ENCODE measurements at regions of chr4 and their contacts with region 1.

Region 1: DNA sequence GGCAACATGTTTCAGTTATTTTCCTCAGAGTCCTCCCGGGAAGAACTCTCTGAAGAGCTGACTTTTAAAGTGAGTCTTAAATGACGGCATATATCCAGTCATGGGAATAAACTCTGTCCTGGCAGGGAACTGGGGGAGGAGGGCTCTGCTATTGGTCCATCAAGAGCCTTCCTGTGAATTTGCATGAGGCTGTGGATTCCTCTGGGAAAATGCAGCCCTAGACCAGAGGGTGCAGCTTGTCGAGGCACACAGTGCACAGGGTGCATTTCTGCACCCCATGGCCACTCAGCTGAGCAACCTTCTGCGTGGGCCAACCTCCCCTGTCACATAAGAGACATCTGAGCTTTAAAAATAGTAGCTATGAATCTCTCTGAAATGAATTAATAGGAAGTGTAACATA is 360.0 kb downstream of the GALNTL6 start:
- DNase-seq: no peak
- H3K4me3 ChIP-seq: no peak overlapping the region
- H3K27ac ChIP-seq: no peak overlapping the region
- H3K4me1 ChIP-seq: no peaks in the 10 kb centered on the region
- H3K27me3 ChIP-seq: no peaks in the 10 kb centered on the region
- CTCF ChIP-seq: no peak

Region 2: DNA sequence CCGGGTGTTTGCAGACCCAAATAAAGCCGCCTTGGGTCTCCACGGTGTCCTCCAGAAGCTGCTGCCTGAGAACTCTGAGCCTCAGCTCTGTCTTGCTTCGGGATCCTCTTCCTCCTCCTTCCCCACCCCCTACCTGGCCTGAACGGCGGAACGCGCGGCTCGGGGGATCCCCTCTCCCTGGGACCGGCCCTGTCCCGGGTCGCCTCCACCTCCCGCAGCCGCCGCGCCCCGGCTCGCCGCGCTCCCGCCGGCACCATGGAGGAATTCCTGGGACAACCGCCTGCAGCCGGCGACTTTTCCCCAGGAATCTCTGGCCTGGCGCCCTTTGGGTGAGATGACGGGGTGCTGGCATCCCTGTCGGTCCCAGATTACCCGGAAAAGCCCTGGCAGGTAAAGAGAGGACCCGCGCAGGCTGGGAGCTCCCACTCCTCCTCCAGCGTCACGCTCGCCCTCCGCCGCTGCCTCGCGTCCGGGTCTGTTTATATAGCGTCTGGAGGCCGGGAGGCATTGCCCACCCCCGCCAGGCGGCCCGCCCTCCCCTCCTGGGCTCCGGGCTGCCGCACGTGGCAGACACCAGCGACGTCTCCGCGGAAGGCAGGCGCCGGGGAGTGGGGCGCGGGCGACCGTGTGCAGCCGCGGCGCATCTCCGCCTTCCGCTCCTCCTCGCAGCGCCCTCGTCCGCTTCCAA is 360.2 kb before region 1 on chr4 and contains the start of gene GALNTL6:
- intact Hi-C with region 1: no loop called
- DNase-seq: no peak
- H3K4me3 ChIP-seq: peak within 1 kb of the TSS; percentile 37 to 55
- H3K27ac ChIP-seq: no peak within 1 kb of the TSS
- H3K4me1 ChIP-seq: peaks cover 0 to 20% (median 14%) of the 10 kb centered on the region in 4 donors
- H3K27me3 ChIP-seq: peaks cover 0 to 15% of the 10 kb centered on the region in 2 donors
- CTCF ChIP-seq: no peak

Region 3: GRCh38 chr4:172073590-172073989 is 99.6 kb before region 1 on chr4:
- intact Hi-C with region 1: no loop called
- DNase-seq: no peak
- H3K4me3 ChIP-seq: no peak overlapping the region
- H3K27ac ChIP-seq: no peak overlapping the region
- H3K4me1 ChIP-seq: no peaks in the 10 kb centered on the region
- H3K27me3 ChIP-seq: no peaks in the 10 kb centered on the region
- CTCF ChIP-seq: no peak

Region 4: GRCh38 chr4:172134521-172134920 is 38.7 kb before region 1 on chr4:
- intact Hi-C with region 1: loop called (anchors 2 kb)
- DNase-seq: no peak
- H3K4me3 ChIP-seq: no peak overlapping the region
- H3K27ac ChIP-seq: no peak overlapping the region
- H3K4me1 ChIP-seq: no peaks in the 10 kb centered on the region
- H3K27me3 ChIP-seq: no peaks in the 10 kb centered on the region
- CTCF ChIP-seq: no peak

Region 5: GRCh38 chr4:172155838-172156345 is 17.3 kb before region 1 on chr4:
- intact Hi-C with region 1: no loop called
- DNase-seq: no peak
- H3K4me3 ChIP-seq: no peak overlapping the region
- H3K27ac ChIP-seq: no peak overlapping the region
- H3K4me1 ChIP-seq: no peaks in the 10 kb centered on the region
- H3K27me3 ChIP-seq: no peaks in the 10 kb centered on the region
- CTCF ChIP-seq: no peak